CD8-positive, alpha-beta T cell (primary cell): ENCODE measurements at regions of chr19 and their contacts with region 1.

Region 1: GRCh38 chr19:46551164-46551563 is 50.0 kb upstream of the CALM3 start:
- DNase-seq: no peak
- ATAC-seq: no peak
- H3K4me3 ChIP-seq: no peak overlapping the region
- H3K4me3 Mint-ChIP-seq: no peak overlapping the region
- H3K27ac ChIP-seq: no peak overlapping the region
- H3K27ac Mint-ChIP-seq: no peak overlapping the region
- H3K4me1 ChIP-seq: no peaks in the 10 kb centered on the region
- H3K4me1 Mint-ChIP-seq: no peaks in the 10 kb centered on the region
- H3K27me3 ChIP-seq: peaks cover 0 to 3% of the 10 kb centered on the region in 2 experiments
- H3K27me3 Mint-ChIP-seq: peaks cover 3% of the 10 kb centered on the region
- CTCF ChIP-seq: no peak

Region 2: DNA sequence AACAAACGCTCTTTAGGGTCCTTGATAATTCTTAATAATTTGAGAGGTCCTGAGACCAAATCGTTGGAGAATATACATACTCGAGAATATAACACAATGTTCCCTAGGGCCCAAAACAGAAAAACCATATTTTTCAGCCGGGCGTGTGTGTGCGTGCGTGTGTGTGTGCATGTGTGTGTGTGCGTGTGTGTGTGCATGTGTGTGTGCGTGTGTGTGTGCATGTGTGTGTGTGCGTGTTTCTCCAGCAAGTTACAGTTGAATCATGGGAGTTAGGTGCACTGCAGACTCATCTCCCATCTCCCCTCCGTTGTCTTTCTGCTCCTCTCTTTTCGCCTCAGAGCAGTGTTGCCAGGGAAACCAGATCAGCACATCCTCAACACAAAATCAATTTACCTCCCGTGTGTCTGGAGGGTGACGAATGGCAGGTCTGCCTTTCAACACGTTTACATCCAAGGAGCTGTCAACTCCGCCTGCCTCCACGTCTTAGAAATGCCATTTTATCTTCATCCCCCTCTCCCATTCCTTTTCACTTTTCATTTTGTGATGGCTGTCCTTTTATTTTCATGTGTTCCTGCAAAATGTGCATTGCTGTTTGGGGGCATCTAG is 47.2 kb before region 1 on chr19:
- CTCF ChIA-PET with region 1: no interaction called
- POLR2A ChIA-PET with region 1: no interaction called
- intact Hi-C with region 1: no loop called
- DNase-seq: no peak
- ATAC-seq: no peak
- H3K4me3 ChIP-seq: no peak overlapping the region
- H3K4me3 Mint-ChIP-seq: no peak overlapping the region
- H3K27ac ChIP-seq: no peak overlapping the region
- H3K27ac Mint-ChIP-seq: no peak overlapping the region
- H3K4me1 ChIP-seq: no peaks in the 10 kb centered on the region
- H3K4me1 Mint-ChIP-seq: no peaks in the 10 kb centered on the region
- H3K27me3 ChIP-seq: no peaks in the 10 kb centered on the region
- H3K27me3 Mint-ChIP-seq: peaks cover 28% of the 10 kb centered on the region
- CTCF ChIP-seq: no peak

Region 3: GRCh38 chr19:46537136-46538097 is 13.7 kb before region 1 on chr19:
- CTCF ChIA-PET with region 1: interaction called, 14 read pairs
- POLR2A ChIA-PET with region 1: no interaction called
- intact Hi-C with region 1: no loop called
- DNase-seq: peak; percentile 36 to 76 (median 68)
- ATAC-seq: peak; percentile 94
- H3K4me3 ChIP-seq: no peak overlapping the region
- H3K4me3 Mint-ChIP-seq: no peak overlapping the region
- H3K27ac ChIP-seq: no peak overlapping the region
- H3K27ac Mint-ChIP-seq: no peak overlapping the region
- H3K4me1 ChIP-seq: no peaks in the 10 kb centered on the region
- H3K4me1 Mint-ChIP-seq: peaks cover 4% of the 10 kb centered on the region
- H3K27me3 ChIP-seq: no peaks in the 10 kb centered on the region
- H3K27me3 Mint-ChIP-seq: no peaks in the 10 kb centered on the region
- CTCF ChIP-seq: peak; percentile 96